PC-9 (cell line): ENCODE measurements at regions of chr6 and their contacts with region 1.

Region 1: GRCh38 chr6:24581084-24581669 is 64.8 kb downstream of the KIAA0319 start:
- DNase-seq: peak in 1 of 2 experiments; percentile 60
- H3K4me3 ChIP-seq: no peak overlapping the region
- H3K27ac ChIP-seq: no peak overlapping the region
- H3K4me1 ChIP-seq: peaks cover 26% of the 10 kb centered on the region
- H3K27me3 ChIP-seq: no peaks in the 10 kb centered on the region
- CTCF ChIP-seq: peak; percentile 88

Region 2: DNA sequence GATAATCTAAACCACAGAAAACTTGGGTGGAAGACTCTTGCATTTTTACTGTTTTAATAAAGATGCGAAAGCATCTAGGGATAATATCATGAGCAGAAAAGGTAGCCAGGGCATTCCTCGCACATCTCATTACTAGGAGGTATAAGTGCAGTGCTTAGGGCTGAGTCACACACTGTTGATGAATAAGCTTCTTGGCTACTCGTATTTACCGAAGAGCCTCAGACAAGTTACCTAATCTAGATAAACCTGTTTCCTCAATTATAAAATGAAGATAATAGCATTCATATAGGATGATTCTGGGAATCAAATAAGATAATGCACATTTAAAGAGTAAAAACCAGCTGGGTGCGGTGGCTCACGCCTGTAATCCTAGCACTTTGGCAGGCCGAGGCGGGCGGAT is 65.6 kb after region 1 on chr6:
- CTCF ChIA-PET with region 1: interaction called, 3 read pairs
- POLR2A ChIA-PET with region 1: interaction called, 4 read pairs
- intact Hi-C with region 1: loop called (anchors 5 kb)
- DNase-seq: peak; percentile 61 to 97
- H3K4me3 ChIP-seq: peak overlapping the region; percentile 76
- H3K27ac ChIP-seq: peak overlapping the region; percentile 97
- H3K4me1 ChIP-seq: peaks cover 42% of the 10 kb centered on the region
- H3K27me3 ChIP-seq: no peaks in the 10 kb centered on the region
- CTCF ChIP-seq: no peak

Region 3: DNA sequence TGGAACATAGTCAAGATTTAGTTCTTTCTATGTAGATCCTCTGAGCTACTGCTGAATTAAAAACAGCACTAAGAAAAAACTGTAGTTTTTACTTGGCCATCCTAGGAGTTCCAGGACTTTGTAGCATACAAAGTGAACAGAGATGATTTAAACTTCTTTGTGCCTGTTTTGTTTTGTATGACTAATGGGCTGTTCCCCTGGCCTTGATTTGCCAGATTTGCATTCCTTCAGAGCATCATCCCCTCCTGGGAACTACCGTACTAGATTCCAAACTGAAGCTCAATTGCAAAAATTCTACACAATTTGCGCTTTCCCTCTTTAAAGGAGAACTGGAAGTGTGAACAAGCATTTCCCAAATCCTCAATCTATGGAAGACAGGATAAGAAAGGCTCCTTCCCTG is 108.8 kb after region 1 on chr6:
- CTCF ChIA-PET with region 1: interaction called, 3 read pairs
- POLR2A ChIA-PET with region 1: no interaction called
- intact Hi-C with region 1: loop called (anchors 1 kb)
- DNase-seq: no peak
- H3K4me3 ChIP-seq: no peak overlapping the region
- H3K27ac ChIP-seq: no peak overlapping the region
- H3K4me1 ChIP-seq: peaks cover 11% of the 10 kb centered on the region
- H3K27me3 ChIP-seq: no peaks in the 10 kb centered on the region
- CTCF ChIP-seq: no peak

Region 4: GRCh38 chr6:24710519-24711303 is 129.5 kb after region 1 on chr6:
- CTCF ChIA-PET with region 1: interaction called, 20 read pairs
- POLR2A ChIA-PET with region 1: no interaction called
- intact Hi-C with region 1: no loop called
- DNase-seq: no peak
- H3K4me3 ChIP-seq: no peak overlapping the region
- H3K27ac ChIP-seq: no peak overlapping the region
- H3K4me1 ChIP-seq: 0 out of 2 replicates have a peak, but pooled peaks cover 1% of the 10 kb centered on the region
- H3K27me3 ChIP-seq: no peaks in the 10 kb centered on the region
- CTCF ChIP-seq: no peak

Region 5: DNA sequence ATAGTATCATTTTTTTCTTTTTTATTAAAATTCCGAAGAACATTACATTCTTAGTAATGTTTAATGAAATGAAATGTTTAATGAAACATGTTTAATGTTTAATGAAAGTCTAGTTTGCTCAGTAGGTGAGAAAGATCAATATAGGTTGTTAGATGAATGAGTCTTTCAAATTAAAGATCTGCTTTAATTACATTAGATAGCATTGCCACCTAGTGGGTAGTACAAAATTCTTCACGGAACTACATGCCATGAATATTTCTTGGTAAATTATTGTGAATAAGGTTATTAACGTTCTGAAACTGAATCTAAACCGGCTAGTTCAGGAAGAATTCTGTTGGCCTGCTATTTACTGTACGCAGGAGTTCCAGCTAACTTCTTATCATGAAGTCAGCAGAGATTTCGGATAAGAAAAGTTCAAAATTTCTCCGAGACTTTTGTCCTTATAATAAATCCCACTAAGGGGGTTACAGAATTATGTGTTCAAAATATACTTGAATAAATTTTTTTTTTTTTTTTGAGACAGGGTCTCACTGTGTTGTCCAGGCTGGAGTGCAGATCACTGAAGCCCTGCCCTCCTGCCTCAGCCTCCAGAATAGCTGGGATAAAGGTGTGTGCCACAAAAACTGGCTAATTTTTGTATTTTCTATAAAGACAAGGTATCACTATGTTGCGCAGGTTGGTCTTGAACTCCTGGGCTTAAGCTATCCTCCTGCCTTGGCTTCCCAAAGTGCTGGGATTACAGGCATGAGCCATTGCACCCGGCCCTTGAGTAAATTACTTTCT is 185.7 kb after region 1 on chr6:
- CTCF ChIA-PET with region 1: no interaction called
- POLR2A ChIA-PET with region 1: no interaction called
- intact Hi-C with region 1: loop called (anchors 2 kb)
- DNase-seq: peak in 1 of 2 experiments; percentile 52
- H3K4me3 ChIP-seq: no peak overlapping the region
- H3K27ac ChIP-seq: no peak overlapping the region
- H3K4me1 ChIP-seq: no peaks in the 10 kb centered on the region
- H3K27me3 ChIP-seq: no peaks in the 10 kb centered on the region
- CTCF ChIP-seq: peak; percentile 75